A673 (cell line): ENCODE measurements at regions of chr15 and their contacts with region 1.

Region 1: GRCh38 chr15:99104788-99105513 is at the start of gene SYNM:
- DNase-seq: peak; percentile 75
- H3K4me3 ChIP-seq: peak within 1 kb of the TSS; percentile 54
- H3K27ac ChIP-seq: no peak within 1 kb of the TSS
- H3K4me1 ChIP-seq: peaks cover 7% of the 10 kb centered on the region
- H3K27me3 ChIP-seq: peaks cover 21% of the 10 kb centered on the region
- CTCF ChIP-seq: peak; percentile 61
- total RNA-seq, gene SYNM: 2.6 and 2.7 TPM in 2 replicates

Region 2: GRCh38 chr15:97425596-97425995 is 1679.4 kb before region 1 on chr15:
- CTCF ChIA-PET with region 1: no interaction called
- POLR2A ChIA-PET with region 1: no interaction called
- intact Hi-C with region 1: no loop called
- DNase-seq: peak; percentile 60
- H3K4me3 ChIP-seq: no peak overlapping the region
- H3K27ac ChIP-seq: no peak overlapping the region
- H3K4me1 ChIP-seq: peaks cover 9% of the 10 kb centered on the region
- H3K27me3 ChIP-seq: no peaks in the 10 kb centered on the region
- CTCF ChIP-seq: no peak

Region 3: GRCh38 chr15:99213187-99213811 is 108.3 kb after region 1 on chr15:
- CTCF ChIA-PET with region 1: interaction called, 11 read pairs
- POLR2A ChIA-PET with region 1: no interaction called
- intact Hi-C with region 1: loop called (anchors 1 kb)
- DNase-seq: peak; percentile 71
- H3K4me3 ChIP-seq: no peak overlapping the region
- H3K27ac ChIP-seq: no peak overlapping the region
- H3K4me1 ChIP-seq: no peaks in the 10 kb centered on the region
- H3K27me3 ChIP-seq: no peaks in the 10 kb centered on the region
- CTCF ChIP-seq: peak; percentile 93

Region 4: GRCh38 chr15:99733268-99734039 is 628.5 kb after region 1 on chr15 and contains the start of gene LYSMD4:
- CTCF ChIA-PET with region 1: no interaction called
- POLR2A ChIA-PET with region 1: no interaction called
- intact Hi-C with region 1: loop called (anchors 10 kb)
- DNase-seq: peak; percentile 98
- H3K4me3 ChIP-seq: peak within 1 kb of the TSS; percentile 81
- H3K27ac ChIP-seq: peak within 1 kb of the TSS; percentile 69
- H3K4me1 ChIP-seq: peaks cover 4% of the 10 kb centered on the region
- H3K27me3 ChIP-seq: no peaks in the 10 kb centered on the region
- CTCF ChIP-seq: no peak
- total RNA-seq, gene LYSMD4: 5.3 and 5.8 TPM in 2 replicates